Caco-2 (cell line): ENCODE measurements at regions of chr9 and their contacts with region 1.

Region 1: GRCh38 chr9:126885131-126885641 is 24.7 kb downstream of the ZBTB34 start:
- DNase-seq: peak; percentile 81 to 89
- H3K4me3 ChIP-seq: no peak overlapping the region
- H3K4me3 Mint-ChIP-seq: peak overlapping the region; percentile 33
- H3K27ac Mint-ChIP-seq: peak overlapping the region; percentile 89
- H3K4me1 ChIP-seq: peaks cover 21% of the 10 kb centered on the region
- H3K4me1 Mint-ChIP-seq: peaks cover 14% of the 10 kb centered on the region
- H3K27me3 ChIP-seq: no peaks in the 10 kb centered on the region
- H3K27me3 Mint-ChIP-seq: no peaks in the 10 kb centered on the region
- CTCF ChIP-seq: no peak

Region 2: GRCh38 chr9:126822278-126822677 is 62.9 kb before region 1 on chr9:
- CTCF ChIA-PET with region 1: no interaction called
- POLR2A ChIA-PET with region 1: no interaction called
- intact Hi-C with region 1: loop called (anchors 1 kb)
- DNase-seq: no peak
- H3K4me3 ChIP-seq: no peak overlapping the region
- H3K4me3 Mint-ChIP-seq: no peak overlapping the region
- H3K27ac Mint-ChIP-seq: no peak overlapping the region
- H3K4me1 ChIP-seq: peaks cover 15% of the 10 kb centered on the region
- H3K4me1 Mint-ChIP-seq: peaks cover 29% of the 10 kb centered on the region
- H3K27me3 ChIP-seq: no peaks in the 10 kb centered on the region
- H3K27me3 Mint-ChIP-seq: no peaks in the 10 kb centered on the region
- CTCF ChIP-seq: no peak

Region 3: GRCh38 chr9:126852086-126852687 is 33.0 kb before region 1 on chr9:
- CTCF ChIA-PET with region 1: no interaction called
- POLR2A ChIA-PET with region 1: interaction called, 14 read pairs
- intact Hi-C with region 1: no loop called
- DNase-seq: no peak
- H3K4me3 ChIP-seq: no peak overlapping the region
- H3K4me3 Mint-ChIP-seq: no peak overlapping the region
- H3K27ac Mint-ChIP-seq: no peak overlapping the region
- H3K4me1 ChIP-seq: no peaks in the 10 kb centered on the region
- H3K4me1 Mint-ChIP-seq: no peaks in the 10 kb centered on the region
- H3K27me3 ChIP-seq: no peaks in the 10 kb centered on the region; the same call in 1 of the 2 replicates
- H3K27me3 Mint-ChIP-seq: no peaks in the 10 kb centered on the region
- CTCF ChIP-seq: no peak

Region 4: DNA sequence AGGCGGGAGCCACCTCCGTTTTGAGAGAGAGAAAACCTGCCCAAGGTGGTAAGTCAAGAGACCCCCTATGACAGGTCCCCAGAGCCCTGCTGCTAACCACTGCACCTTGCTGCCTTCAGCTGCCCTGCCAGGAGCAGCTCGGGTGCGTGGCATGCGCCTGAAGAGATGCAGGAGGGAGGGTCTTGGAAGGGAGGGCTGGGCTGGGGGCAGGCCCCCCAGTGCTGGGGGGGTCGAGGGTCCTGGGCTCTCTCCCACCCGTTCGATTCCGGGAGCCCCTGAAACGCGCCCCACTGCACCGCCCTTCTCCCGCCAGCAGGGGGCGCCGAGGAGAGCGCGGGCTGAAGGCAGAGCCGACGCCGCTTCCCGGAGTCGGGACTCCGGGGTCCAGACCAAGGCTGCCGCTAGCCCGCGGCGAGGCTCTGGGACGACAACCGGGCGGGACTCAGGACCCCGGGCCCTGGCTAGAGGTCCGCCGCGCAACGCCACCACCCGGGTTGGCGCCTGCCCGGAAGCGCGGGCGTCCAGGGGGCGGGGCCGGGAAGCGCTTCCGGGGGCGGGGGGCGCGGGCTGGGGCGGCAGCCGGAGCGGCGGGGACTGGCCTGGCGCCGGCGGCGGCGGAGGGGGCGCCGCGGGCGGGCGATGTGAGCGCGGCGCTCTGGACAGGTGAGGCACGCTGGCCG is 25.0 kb before region 1 on chr9 and contains the start of gene ZBTB34:
- CTCF ChIA-PET with region 1: no interaction called
- POLR2A ChIA-PET with region 1: no interaction called
- intact Hi-C with region 1: loop called (anchors 1 kb)
- DNase-seq: peak; percentile 74 to 85
- H3K4me3 ChIP-seq: peak within 1 kb of the TSS; percentile 84
- H3K4me3 Mint-ChIP-seq: peak within 1 kb of the TSS; percentile 74
- H3K27ac Mint-ChIP-seq: peak within 1 kb of the TSS; percentile 75
- H3K4me1 ChIP-seq: no peaks in the 10 kb centered on the region; the same call in 1 of the 2 replicates
- H3K4me1 Mint-ChIP-seq: peaks cover 16% of the 10 kb centered on the region
- H3K27me3 ChIP-seq: no peaks in the 10 kb centered on the region
- H3K27me3 Mint-ChIP-seq: no peaks in the 10 kb centered on the region
- CTCF ChIP-seq: peak; percentile 97 to 99
- total RNA-seq, gene ZBTB34: 16.8 and 17.1 TPM in 2 replicates

Region 5: DNA sequence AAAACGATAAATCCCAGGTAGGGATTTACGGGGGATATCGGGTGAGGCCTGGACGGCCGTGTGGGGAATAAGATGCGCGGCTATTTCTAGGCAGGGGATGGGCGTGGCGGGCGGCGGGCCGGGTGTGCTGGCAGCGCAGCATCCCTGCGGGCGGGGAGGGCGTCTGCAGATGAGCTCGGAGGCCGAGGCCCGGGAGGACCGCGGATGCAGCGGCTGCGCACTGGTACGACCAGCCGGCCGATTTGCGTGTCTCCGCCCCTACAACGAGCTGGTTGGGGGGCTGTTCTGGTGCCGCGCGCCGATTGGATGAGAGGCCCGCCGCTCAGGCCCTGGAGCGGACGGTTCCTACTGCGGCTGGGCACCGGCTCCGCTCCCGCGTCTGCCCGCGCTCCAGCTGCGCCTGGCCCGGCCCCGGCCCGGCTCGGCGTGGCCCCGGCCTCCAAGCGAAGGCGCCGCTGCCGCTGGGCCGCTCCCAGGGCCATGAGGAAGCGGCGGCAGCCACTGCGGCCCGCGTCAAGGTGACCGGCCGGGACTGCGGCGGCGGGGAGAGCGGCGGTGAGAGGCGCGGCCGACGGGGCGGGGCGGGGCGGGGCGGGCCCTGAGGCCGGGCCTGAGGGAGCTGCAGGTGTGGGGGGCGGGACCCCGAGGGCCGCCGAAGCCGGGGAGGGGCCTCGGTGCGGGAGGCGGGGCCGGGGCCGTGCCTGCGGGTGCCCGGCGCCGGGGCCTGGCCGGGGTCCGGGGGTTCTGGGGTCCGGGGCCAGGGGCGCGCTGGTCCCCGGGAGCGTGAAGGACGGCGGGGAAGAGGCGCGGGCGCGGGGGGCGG is 29.5 kb after region 1 on chr9 and contains the start of gene RALGPS1:
- CTCF ChIA-PET with region 1: interaction called, 3 read pairs
- POLR2A ChIA-PET with region 1: interaction called, 5 read pairs
- intact Hi-C with region 1: loop called (anchors 2 kb)
- DNase-seq: peak; percentile 96 to 98
- H3K4me3 ChIP-seq: peak within 1 kb of the TSS; percentile 86
- H3K4me3 Mint-ChIP-seq: peak within 1 kb of the TSS; percentile 78
- H3K27ac Mint-ChIP-seq: peak within 1 kb of the TSS; percentile 71
- H3K4me1 ChIP-seq: peaks cover 28% of the 10 kb centered on the region
- H3K4me1 Mint-ChIP-seq: peaks cover 8% of the 10 kb centered on the region
- H3K27me3 ChIP-seq: no peaks in the 10 kb centered on the region
- H3K27me3 Mint-ChIP-seq: peaks cover 7% of the 10 kb centered on the region
- CTCF ChIP-seq: no peak
- total RNA-seq, gene RALGPS1: 41.5 and 43.9 TPM in 2 replicates